Endothelial cell of umbilical vein (primary cell): ENCODE measurements at regions of chr5 and their contacts with region 1.

Region 1: DNA sequence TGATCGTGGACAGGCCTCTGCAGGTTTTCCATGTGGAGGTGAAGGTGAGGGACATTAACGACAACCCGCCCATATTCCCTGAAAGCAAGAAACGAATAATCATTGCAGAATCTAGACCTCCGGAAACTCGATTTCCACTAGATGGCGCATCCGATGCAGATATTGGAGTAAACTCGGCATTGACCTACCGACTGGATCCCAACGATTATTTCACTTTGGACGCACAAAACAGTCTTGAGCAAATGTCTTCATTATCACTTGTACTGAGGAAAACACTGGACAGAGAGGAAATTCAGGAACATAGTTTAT is 621 bp downstream of the PCDHA13 start:
- DNase-seq: no peak
- H3K4me3 ChIP-seq: no peak overlapping the region
- H3K27ac ChIP-seq: no peak overlapping the region
- H3K4me1 ChIP-seq: no peaks in the 10 kb centered on the region
- H3K27me3 ChIP-seq: peaks cover 0 to 7% of the 10 kb centered on the region in 2 experiments
- CTCF ChIP-seq: no peak
- POLR2A ChIP-seq: no peak

Region 2: DNA sequence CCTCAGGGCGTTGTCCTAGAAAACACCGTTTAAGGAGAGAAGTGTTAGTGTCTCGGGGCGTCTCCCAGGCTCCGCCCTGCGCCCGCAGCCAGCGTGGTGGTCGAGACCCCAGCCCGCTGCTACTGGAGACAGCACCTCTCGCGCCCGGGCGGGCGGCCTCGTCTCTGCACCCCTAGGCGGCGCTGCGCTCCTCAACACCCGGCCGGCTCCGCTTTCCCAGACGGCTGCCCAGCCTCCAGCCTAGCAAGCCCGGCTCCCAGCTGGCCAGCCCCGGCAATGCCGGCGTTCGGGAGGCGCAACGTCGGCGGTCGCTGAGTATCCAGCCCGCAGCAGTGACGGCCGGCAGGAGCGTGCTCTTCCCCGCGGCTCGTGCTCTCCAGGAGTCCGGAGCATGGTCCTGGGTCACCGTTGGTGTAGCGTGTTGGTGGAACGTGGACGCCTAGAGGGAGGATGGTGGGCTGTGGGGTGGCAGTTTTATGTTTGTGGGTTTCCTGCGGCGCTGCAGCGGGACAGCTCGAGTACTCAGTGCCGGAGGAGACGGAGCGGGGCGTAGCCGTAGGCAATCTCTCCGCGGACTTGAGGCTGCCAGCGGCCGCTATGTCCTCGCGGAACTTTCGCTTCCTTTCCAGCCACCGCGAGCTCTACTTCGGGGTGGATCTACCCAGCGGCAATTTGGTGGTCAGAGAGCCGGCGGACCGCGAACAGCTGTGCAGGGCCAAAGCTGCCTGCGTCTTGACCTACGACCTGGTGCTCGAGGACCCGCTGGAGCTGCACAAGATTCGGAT is 44.1 kb after region 1 on chr5:
- CTCF ChIA-PET with region 1: no interaction called
- POLR2A ChIA-PET with region 1: no interaction called
- dilution Hi-C with region 1: no loop called
- intact Hi-C with region 1: loop called (anchors 5 kb)
- DNase-seq: peak; percentile 77
- H3K4me3 ChIP-seq: peak overlapping the region in 2 of 3 experiments; percentile 1 to 23
- H3K27ac ChIP-seq: no peak overlapping the region
- H3K4me1 ChIP-seq: peaks cover 2% of the 10 kb centered on the region
- H3K27me3 ChIP-seq: peaks cover 23 to 25% of the 10 kb centered on the region in 2 experiments
- CTCF ChIP-seq: peak; percentile 87 to 96
- POLR2A ChIP-seq: no peak